ENCODE measurements at regions of chr6 and their contacts with region 1.

Region 1: GRCh38 chr6:43644931-43645612 is at the start of gene RSPH9:
- DNase-seq: no peak
- H3K4me3 ChIP-seq: peak within 1 kb of the TSS; percentile 61
- H3K27ac ChIP-seq: peak within 1 kb of the TSS; percentile 21
- H3K27me3 ChIP-seq: no peaks in the 10 kb centered on the region
- CTCF ChIP-seq: no peak
- polyA plus RNA-seq, gene RSPH9: 0.37 and 0.51 TPM in 2 replicates

Region 2: DNA sequence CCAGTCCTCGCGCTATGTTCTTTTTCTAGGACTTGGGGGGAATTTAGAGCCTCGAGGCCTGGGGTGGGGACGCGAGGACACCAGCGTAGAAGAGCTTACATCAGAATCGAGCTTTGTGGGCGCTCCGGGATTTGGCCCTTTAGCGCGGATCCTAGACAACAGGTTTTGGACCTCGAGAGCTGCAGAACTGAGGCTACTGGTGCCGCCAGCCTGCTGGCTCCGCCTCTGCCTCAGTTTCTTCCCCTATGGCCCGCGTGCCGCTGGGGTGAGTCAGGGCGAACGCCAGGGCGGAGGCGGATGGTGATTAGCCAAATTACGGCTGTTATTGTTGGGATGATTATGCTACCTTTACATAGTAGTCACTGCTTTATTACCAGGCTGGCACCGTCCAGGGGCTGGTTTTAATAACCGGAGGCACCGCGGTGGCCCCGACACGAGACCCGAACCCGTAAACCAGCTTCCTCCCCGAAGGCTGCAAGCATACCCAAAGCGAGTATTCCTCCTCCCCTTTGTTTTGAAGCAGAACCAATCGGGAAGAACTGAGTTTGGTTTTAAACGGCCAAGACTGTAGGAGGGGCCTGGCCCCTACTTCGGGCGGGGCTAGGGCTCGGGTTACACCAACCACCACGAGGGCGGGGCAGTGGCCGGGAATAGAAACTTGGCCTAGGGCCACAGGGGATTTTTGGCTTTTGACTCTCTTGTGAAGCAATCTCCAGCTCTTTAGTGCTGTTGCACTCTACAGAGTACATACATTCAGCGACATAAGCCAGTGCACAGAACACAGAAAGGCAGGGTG is 15.4 kb before region 1 on chr6:
- CTCF ChIA-PET with region 1: no interaction called
- POLR2A ChIA-PET with region 1: interaction called, 14 read pairs
- DNase-seq: peak; percentile 94
- H3K4me3 ChIP-seq: peak overlapping the region; percentile 84
- H3K27ac ChIP-seq: peak overlapping the region; percentile 96
- H3K27me3 ChIP-seq: no peaks in the 10 kb centered on the region
- CTCF ChIP-seq: no peak